Ascending aorta (tissue), 2 donors: ENCODE measurements at regions of chr1 and their contacts with region 1.

Region 1: DNA sequence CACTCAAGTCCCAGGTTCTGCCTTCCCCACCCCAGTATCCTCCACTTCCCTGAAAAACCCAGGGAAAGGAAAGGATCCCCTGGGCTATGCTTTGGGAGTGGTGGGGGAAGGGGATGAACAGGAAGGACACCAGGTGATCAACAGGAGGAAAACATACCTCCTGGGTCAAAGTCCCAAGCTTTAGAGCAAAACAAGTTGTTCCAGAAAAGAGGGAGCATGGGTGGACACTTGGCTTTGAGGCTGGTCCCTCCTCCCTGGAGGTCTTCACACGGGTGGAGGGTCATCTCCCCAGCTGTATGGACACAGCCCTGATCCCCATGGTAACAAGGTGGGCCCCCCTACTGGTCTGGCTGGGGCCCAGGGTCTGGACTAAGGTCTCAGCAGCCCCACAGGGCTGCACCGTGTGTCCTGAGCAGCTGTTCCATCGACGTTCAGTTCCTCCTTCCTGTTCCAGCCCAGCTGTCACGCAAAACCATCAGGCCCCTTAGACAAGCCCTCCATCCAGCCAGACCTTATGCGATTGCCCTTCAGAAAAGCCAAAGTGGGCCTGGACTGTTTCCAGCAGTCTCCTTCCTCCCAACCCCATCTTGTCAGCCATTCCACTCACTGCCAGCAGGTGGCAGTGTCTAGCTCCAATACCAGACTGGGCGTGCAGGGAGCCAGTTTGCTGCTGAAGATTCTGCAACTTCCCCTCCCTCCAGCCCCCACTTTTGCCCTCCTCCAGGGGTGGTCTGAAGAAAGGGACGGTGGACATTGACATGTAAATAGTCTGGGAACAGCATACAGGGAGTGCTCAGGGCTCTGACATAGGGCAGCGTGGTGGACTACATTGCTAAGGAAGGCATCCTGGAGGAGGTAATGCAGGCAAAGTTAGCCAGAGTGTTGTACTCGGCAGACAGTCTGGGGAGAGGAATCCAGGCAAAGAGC is 2.9 kb upstream of the PDZK1IP1 start:
- DNase-seq: peak in 1 of 2 donors; percentile 83
- H3K4me3 ChIP-seq: no peak overlapping the region
- H3K27ac ChIP-seq: no peak overlapping the region
- H3K4me1 ChIP-seq: peaks cover 7 to 28% of the 10 kb centered on the region in 2 donors
- H3K27me3 ChIP-seq: no peaks in the 10 kb centered on the region
- CTCF ChIP-seq: peak; percentile 84 to 96 (median 90)

Region 2: DNA sequence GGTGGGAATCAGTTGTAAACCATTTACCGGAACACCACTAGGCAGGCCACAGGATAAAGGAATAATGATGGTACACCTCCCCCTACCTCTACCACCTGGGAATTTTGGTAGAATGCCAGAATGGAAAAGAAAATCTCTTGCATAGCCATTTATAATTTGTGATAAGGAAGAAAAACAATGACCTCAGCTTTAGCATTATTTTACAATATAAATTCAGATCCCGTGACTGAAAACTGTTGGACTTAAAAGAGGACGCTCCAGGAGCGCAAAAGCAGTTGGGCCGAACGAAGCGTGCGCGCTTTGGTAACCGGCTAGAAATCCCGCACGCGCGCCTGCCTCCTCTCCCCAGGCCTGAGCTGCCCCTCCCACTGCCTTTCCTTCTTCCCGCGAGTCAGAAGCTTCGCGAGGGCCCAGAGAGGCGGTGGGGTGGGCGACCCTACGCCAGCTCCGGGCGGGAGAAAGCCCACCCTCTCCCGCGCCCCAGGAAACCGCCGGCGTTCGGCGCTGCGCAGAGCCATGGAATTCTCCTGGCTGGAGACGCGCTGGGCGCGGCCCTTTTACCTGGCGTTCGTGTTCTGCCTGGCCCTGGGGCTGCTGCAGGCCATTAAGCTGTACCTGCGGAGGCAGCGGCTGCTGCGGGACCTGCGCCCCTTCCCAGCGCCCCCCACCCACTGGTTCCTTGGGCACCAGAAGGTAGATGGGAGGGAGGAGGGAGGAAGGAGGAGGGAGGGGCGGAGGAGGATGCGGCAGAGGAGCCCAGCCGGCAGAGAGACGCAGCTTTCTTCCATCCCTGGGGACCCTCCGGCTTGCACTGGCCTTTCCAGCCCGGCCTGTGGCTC is 169.2 kb before region 1 on chr1 and contains the start of gene CYP4X1:
- intact Hi-C with region 1: loop called (anchors 5 kb)
- DNase-seq: no peak
- H3K4me3 ChIP-seq: peak within 1 kb of the TSS; percentile 52 to 75
- H3K27ac ChIP-seq: peak within 1 kb of the TSS; percentile 81 to 93
- H3K4me1 ChIP-seq: peaks cover 6 to 41% of the 10 kb centered on the region in 2 donors
- H3K27me3 ChIP-seq: no peaks in the 10 kb centered on the region
- CTCF ChIP-seq: no peak
- total RNA-seq, gene CYP4X1: 17.2 TPM

Region 3: DNA sequence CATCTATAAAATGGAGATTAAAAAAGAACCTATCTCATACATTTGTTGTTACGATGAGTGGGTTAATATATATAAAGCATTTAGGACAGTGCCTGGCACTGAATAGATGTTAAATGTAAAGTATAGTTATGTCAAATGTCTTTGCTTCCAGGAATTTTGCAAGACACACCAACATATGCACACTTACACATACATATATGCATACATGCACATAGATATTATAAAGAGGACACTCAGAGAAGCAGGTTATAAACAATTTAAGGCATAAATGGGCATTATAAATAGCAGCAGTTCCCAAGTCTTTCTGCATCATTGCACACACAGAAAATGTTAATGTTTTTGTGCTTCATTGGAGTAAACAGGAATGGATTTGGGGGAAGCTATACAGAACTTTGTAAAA is 156.0 kb before region 1 on chr1:
- intact Hi-C with region 1: no loop called
- DNase-seq: no peak
- H3K4me3 ChIP-seq: no peak overlapping the region
- H3K27ac ChIP-seq: no peak overlapping the region
- H3K4me1 ChIP-seq: peaks cover under 1 to 8% of the 10 kb centered on the region in 2 donors
- H3K27me3 ChIP-seq: no peaks in the 10 kb centered on the region
- CTCF ChIP-seq: no peak

Region 4: DNA sequence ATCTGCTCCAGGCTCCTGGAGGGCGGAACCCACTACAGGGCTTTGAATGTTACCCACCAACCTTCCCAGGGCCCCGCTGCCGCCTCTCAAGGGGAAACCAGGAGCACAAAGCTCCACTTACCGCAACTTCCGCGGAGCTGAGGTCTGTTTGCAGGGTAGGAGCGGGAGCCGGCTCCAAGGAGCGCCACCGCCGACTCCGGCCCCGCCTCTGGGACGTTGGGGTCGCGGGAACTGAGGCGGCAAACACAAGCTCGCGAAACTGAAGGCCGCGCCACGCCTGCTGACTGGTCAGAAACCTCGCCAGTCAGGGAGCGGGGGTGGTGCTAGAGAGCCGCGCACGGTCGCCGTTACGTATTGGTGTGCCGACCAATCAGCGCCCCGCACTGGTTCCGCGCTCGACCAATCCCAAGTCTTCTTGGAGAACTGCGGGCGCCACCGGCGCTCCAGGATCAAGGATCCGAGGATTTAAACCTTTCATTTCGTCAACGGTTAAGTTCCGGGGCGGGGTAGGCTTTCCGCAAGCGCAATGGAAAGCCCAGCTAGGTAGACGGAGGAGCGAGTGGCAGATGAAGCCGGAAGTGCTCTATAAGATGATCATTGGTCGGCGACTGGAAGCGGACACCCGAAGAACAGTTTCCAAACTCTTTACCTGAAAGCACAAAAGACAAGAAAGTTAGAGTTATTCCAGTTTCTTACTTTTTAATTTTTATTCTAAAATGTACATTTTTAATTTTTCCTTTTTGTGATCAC is 121.4 kb after region 1 on chr1 and contains the start of gene STIL:
- intact Hi-C with region 1: loop called (anchors 1 kb)
- DNase-seq: peak; percentile 93 to 99
- H3K4me3 ChIP-seq: peak within 1 kb of the TSS; percentile 69 to 85
- H3K27ac ChIP-seq: peak within 1 kb of the TSS; percentile 68 to 87
- H3K4me1 ChIP-seq: peaks cover 0 to 7% of the 10 kb centered on the region in 2 donors
- H3K27me3 ChIP-seq: no peaks in the 10 kb centered on the region
- CTCF ChIP-seq: no peak
- total RNA-seq, gene STIL: 0.11 TPM

Region 5: DNA sequence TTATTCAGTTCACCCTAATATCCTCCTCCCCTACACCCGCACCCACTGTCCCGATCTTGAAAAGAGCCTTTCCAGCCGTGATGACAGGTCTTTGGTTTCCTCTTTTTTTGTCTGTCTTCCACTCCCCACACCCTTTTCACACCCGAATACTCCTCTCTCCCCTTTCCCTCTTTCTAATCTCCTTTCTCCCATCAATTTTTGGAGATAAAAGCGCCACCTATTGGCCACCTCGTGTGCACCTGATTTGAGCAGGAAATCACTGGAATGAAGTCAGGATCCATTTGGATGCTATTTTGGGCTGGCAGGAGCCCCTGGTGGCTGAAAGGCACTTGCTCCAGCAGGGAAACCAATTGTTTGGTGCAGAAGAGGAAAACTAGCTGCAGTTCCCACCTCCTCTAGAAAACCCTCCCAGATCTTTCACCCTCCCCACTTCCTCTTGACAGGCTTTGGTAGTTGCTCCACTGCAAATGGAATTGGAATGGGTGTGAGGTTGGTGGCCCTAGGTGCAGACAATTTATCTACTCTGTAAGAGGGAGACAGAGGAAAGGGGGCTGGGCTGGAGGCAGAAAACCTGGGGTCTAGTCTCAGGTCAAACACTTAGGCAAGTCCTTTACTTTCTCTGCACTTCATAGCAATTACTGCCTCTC is 231.7 kb after region 1 on chr1:
- intact Hi-C with region 1: loop called (anchors 5 kb)
- DNase-seq: no peak
- H3K4me3 ChIP-seq: no peak overlapping the region
- H3K27ac ChIP-seq: no peak overlapping the region
- H3K4me1 ChIP-seq: no peaks in the 10 kb centered on the region
- H3K27me3 ChIP-seq: no peaks in the 10 kb centered on the region
- CTCF ChIP-seq: peak; percentile 41 to 75 (median 65)

Region 6: GRCh38 chr1:47725992-47726855 is 533.5 kb after region 1 on chr1:
- intact Hi-C with region 1: loop called (anchors 5 kb)
- DNase-seq: peak in 1 of 2 donors; percentile 89
- H3K4me3 ChIP-seq: peak overlapping the region; percentile 28 to 51
- H3K27ac ChIP-seq: no peak overlapping the region
- H3K4me1 ChIP-seq: peaks cover 7 to 15% of the 10 kb centered on the region in 2 donors
- H3K27me3 ChIP-seq: no peaks in the 10 kb centered on the region
- CTCF ChIP-seq: peak; percentile 75 to 85 (median 83)